ENCODE measurements at regions of chr9 and their contacts with region 1.

Region 1: DNA sequence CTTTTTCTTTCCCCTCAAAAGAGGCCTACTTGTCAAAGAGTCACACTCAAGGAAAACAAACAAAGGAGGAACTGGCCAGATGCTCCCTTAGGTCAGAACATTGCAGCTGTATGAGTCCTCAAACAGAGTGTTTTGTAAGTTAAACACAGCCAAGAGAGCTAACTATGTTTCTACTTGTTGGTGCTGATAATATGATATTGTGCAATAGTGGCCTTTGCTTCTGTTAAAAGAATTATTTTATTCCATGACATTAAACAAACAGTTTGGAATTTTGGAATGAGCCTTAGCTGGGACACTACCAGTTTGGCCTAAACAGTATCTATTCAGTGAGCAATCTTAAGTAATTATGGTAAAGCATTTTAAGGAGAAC is 56.0 kb upstream of the TPD52L3 start:
- DNase-seq: peak; percentile 54
- H3K4me3 ChIP-seq: no peak overlapping the region
- H3K27ac ChIP-seq: peak overlapping the region; percentile 56 to 67
- H3K4me1 ChIP-seq: peaks cover 2% of the 10 kb centered on the region
- H3K27me3 ChIP-seq: no peaks in the 10 kb centered on the region
- CTCF ChIP-seq: no peak
- POLR2A ChIP-seq: no peak

Region 2: GRCh38 chr9:6215562-6215961 is 56.7 kb before region 1 on chr9 and contains the start of gene IL33:
- intact Hi-C with region 1: loop called (anchors 5 kb)
- DNase-seq: peak; percentile 73
- H3K4me3 ChIP-seq: peak within 1 kb of the TSS; percentile 12 to 13
- H3K27ac ChIP-seq: peak within 1 kb of the TSS in 1 of 2 donors; percentile 18
- H3K4me1 ChIP-seq: no peaks in the 10 kb centered on the region
- H3K27me3 ChIP-seq: no peaks in the 10 kb centered on the region
- CTCF ChIP-seq: no peak
- POLR2A ChIP-seq: no peak
- total RNA-seq, gene IL33: 11.6 to 13.8 TPM

Measured in prostate gland (tissue), 2 donors.